ENCODE measurements at regions of chr1 and their contacts with region 1.

Region 1: DNA sequence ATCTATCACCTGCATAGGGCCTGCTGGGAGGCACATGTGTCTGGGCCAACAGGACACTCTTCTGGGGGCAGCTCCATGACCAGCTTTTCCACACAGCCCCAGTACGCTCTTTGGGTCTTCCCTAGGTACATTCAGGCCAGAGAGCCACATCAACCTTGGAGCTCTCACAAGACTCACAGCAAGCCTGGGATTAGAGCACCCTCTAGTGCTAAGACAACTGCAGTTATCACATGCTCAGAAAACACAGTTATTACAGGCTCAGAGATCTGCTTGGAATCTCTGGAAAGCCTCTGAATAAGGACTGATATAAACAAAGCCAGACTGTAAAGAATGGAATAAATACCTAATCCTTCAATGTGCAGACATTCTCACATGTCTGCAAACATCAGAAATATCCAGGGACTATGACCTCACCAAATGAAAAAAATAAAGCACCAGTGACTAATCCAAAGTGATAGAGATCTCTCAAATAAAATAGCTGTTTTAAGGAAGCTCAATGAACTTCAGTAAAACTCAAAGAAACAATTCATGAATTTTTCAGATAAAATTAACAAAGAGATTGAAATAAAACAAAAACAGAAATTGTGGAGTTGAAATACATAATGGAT is 563.9 kb upstream of the NR5A2 start:
- DNase-seq: peak; percentile 92
- H3K4me3 ChIP-seq: no peak overlapping the region
- H3K27ac ChIP-seq: peak overlapping the region; percentile 46
- H3K4me1 ChIP-seq: peaks cover 9% of the 10 kb centered on the region
- H3K27me3 ChIP-seq: no peaks in the 10 kb centered on the region
- CTCF ChIP-seq: peak; percentile 73

Region 2: DNA sequence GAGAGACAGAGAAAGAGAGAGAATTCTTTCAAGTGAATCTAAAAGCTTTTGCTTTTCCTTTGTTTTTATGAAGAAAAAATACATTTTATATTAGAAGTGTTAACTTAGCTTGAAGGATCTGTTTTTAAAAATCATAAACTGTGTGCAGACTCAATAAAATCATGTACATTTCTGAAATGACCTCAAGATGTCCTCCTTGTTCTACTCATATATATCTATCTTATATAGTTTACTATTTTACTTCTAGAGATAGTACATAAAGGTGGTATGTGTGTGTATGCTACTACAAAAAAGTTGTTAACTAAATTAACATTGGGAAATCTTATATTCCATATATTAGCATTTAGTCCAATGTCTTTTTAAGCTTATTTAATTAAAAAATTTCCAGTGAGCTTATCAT is 707.2 kb before region 1 on chr1:
- CTCF ChIA-PET with region 1: interaction called, 5 read pairs
- POLR2A ChIA-PET with region 1: no interaction called
- intact Hi-C with region 1: loop called (anchors 1 kb)
- DNase-seq: peak; percentile 67
- H3K4me3 ChIP-seq: no peak overlapping the region
- H3K27ac ChIP-seq: peak overlapping the region; percentile 29
- H3K4me1 ChIP-seq: peaks cover 27% of the 10 kb centered on the region
- H3K27me3 ChIP-seq: no peaks in the 10 kb centered on the region
- CTCF ChIP-seq: peak; percentile 62

Region 3: DNA sequence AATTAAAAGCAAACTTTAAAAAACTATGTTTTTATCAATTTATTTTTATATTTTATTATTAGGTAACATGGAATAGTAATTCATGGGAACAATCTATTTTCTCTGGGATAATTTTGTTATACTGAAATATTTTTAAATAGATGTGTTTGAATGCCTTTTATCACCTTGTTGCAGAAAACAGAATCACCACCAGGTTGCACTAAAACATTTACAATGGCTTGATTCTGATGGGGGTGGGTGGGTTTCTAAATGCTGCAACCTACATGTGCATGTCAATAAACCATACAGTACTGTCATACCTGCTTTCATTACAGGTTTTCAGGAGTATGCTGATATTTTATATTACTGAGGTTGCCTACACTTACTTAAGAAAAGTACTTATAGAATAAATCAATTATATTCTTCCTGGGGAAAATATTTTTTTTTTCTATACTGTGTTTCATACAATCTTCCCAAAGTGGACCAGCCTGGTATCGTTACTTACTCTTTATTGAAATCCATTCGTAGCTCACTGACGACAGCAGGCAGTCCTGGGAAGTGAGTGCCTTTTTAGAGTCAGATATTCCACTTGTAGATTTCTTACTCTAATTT is 692.0 kb before region 1 on chr1:
- CTCF ChIA-PET with region 1: interaction called, 4 read pairs
- POLR2A ChIA-PET with region 1: no interaction called
- intact Hi-C with region 1: loop called (anchors 5 kb)
- DNase-seq: peak; percentile 91
- H3K4me3 ChIP-seq: no peak overlapping the region
- H3K27ac ChIP-seq: peak overlapping the region; percentile 78
- H3K4me1 ChIP-seq: peaks cover 39% of the 10 kb centered on the region
- H3K27me3 ChIP-seq: no peaks in the 10 kb centered on the region
- CTCF ChIP-seq: peak; percentile 78

Region 4: DNA sequence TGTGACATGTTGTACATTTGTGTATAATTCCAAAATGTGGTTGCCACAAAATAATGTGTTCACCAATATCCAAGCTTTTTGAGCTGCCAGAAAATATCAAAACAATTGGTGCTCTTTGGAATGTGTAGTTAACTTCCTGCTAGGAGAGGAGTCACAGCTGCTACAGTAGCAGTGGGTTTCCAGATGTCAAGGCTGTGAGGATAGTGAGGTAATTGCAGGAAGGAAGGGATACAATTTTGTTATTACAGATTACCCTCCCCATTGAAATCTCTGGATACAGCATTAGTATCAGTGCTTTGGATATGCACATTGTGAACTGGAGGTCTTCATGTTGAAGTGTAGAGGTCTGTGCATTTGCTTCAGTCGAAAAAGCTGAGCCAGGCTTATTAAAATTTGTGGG is 571.6 kb before region 1 on chr1:
- CTCF ChIA-PET with region 1: no interaction called
- POLR2A ChIA-PET with region 1: no interaction called
- intact Hi-C with region 1: loop called (anchors 10 kb)
- DNase-seq: peak; percentile 97
- H3K4me3 ChIP-seq: peak overlapping the region; percentile 4
- H3K27ac ChIP-seq: peak overlapping the region; percentile 94
- H3K4me1 ChIP-seq: peaks cover 97% of the 10 kb centered on the region
- H3K27me3 ChIP-seq: no peaks in the 10 kb centered on the region
- CTCF ChIP-seq: no peak

Region 5: DNA sequence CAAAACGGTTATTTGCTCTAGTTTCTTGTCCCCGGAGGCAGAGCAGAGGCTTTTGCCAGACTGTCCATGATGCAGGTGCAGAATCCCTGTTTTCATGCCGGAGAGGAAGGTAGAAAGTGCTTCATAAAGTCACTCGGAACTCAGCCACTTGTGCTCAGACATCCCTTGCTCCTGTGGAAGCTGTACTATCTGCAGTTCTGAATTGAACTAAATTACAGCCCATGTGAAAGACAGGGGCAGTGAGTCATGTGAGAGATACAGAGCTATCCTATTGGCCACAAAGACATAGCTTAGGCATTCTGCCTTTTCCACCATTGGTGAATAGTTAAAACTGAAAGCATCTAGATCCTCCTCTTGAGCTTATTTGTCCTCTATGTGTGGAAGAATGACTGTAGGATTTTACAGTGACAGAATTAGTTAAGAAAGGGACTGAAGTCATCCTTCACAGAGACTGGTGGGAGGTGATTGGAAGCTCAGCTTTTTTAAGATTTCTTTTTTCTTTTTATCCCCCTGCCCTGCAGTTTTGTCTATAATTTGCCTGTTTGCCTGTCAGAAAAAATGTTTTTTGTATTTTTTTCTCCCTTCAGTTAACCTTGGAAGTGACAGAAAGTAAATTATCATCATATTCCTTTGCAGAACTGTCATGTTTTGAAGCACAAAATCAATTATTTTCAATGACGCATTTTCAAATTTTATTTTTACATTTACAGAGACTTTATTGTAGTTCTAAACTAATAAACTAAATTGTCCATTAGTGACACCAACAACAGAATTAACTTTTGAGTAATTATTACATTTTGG is 526.2 kb before region 1 on chr1:
- CTCF ChIA-PET with region 1: no interaction called
- POLR2A ChIA-PET with region 1: no interaction called
- intact Hi-C with region 1: loop called (anchors 2 kb)
- DNase-seq: peak; percentile 98
- H3K4me3 ChIP-seq: peak overlapping the region; percentile 68
- H3K27ac ChIP-seq: peak overlapping the region; percentile 94
- H3K4me1 ChIP-seq: peaks cover 10% of the 10 kb centered on the region
- H3K27me3 ChIP-seq: no peaks in the 10 kb centered on the region
- CTCF ChIP-seq: no peak

Region 6: GRCh38 chr1:199029855-199030254 is 433.8 kb before region 1 on chr1:
- CTCF ChIA-PET with region 1: no interaction called
- POLR2A ChIA-PET with region 1: no interaction called
- intact Hi-C with region 1: loop called (anchors 10 kb)
- DNase-seq: no peak
- H3K4me3 ChIP-seq: no peak overlapping the region
- H3K27ac ChIP-seq: no peak overlapping the region
- H3K4me1 ChIP-seq: peaks cover 9% of the 10 kb centered on the region
- H3K27me3 ChIP-seq: no peaks in the 10 kb centered on the region
- CTCF ChIP-seq: no peak

Region 7: GRCh38 chr1:199551967-199552565 is 88.4 kb after region 1 on chr1:
- CTCF ChIA-PET with region 1: interaction called, 7 read pairs
- POLR2A ChIA-PET with region 1: no interaction called
- intact Hi-C with region 1: loop called (anchors 5 kb)
- DNase-seq: peak; percentile 90
- H3K4me3 ChIP-seq: no peak overlapping the region
- H3K27ac ChIP-seq: peak overlapping the region; percentile 81
- H3K4me1 ChIP-seq: peaks cover 33% of the 10 kb centered on the region
- H3K27me3 ChIP-seq: no peaks in the 10 kb centered on the region
- CTCF ChIP-seq: peak; percentile 92

Region 8: DNA sequence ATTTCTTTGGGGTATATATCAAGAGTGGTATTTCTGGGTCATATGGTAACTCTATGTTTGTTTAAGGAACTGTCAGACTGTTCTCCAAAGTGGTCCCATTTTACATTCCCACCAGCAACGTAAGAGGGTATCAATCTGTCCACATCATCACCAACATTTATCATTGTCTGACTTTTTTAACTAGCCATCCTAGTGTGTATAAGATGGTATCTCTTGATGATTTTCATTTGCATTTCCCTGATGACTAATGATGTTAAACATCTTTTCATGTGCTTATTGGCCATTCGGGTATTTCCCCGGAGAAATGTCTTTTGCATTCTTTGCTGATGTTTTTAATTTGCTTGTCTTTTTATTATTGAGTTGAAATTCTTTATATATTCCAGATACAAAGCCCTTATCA is 193.8 kb after region 1 on chr1:
- CTCF ChIA-PET with region 1: no interaction called
- POLR2A ChIA-PET with region 1: no interaction called
- intact Hi-C with region 1: no loop called
- DNase-seq: no peak
- H3K4me3 ChIP-seq: no peak overlapping the region
- H3K27ac ChIP-seq: no peak overlapping the region
- H3K4me1 ChIP-seq: no peaks in the 10 kb centered on the region
- H3K27me3 ChIP-seq: no peaks in the 10 kb centered on the region
- CTCF ChIP-seq: no peak